Upper lobe of right lung (tissue), 1 donor: ENCODE measurements at regions of chr15 and their contacts with region 1.

Region 1: GRCh38 chr15:77543159-77543882 is 89.4 kb downstream of the LINGO1 start:
- DNase-seq: peak; percentile 91
- ATAC-seq: peak; percentile 92
- H3K4me3 ChIP-seq: peak overlapping the region; percentile 46
- H3K27ac ChIP-seq: no peak overlapping the region
- H3K4me1 ChIP-seq: peaks cover 21% of the 10 kb centered on the region
- H3K27me3 ChIP-seq: no peaks in the 10 kb centered on the region
- CTCF ChIP-seq: peak; percentile 98

Region 2: DNA sequence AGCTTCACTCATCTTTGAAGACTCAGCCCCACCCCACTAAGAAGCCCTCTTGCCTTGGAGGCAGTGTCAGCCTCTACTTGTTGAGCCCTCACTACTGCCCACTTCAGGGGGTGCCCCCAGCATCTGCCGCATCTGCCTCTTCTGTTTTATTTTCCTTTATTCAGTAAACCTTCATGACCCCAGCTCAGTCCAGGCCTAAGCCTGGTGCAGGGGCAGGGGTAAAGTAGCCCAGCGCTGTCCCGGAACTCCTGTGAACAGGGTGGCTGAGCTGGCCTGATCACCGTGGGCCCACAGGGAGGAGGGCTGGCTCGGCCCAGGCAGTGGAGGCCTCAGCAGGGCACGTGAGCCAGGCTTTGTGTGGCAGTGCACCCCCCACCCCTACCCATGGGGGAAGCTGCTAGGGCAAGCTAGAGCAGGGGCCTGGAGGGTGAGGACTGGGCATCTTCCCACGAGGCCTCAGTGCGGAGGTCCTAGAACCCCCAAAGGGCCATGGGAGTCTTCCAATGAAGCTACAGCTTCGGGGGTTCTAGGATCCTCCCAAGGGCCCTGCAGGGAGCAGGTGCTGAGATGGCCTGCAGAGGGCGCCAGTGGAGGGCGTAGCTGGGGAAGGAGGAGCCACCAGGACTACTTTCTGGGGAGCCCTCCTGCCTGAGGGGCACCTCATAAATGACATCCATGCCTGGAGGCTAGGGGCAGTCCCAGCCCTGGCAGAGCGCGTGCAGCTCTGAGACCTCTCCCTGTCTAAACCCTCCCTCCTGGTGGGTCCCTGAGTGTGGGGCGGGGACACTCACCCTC is 508.4 kb before region 1 on chr15:
- intact Hi-C with region 1: loop called (anchors 10 kb)
- DNase-seq: peak; percentile 74
- ATAC-seq: peak; percentile 32
- H3K4me3 ChIP-seq: no peak overlapping the region
- H3K27ac ChIP-seq: no peak overlapping the region
- H3K4me1 ChIP-seq: no peaks in the 10 kb centered on the region
- H3K27me3 ChIP-seq: no peaks in the 10 kb centered on the region
- CTCF ChIP-seq: peak; percentile 64

Region 3: DNA sequence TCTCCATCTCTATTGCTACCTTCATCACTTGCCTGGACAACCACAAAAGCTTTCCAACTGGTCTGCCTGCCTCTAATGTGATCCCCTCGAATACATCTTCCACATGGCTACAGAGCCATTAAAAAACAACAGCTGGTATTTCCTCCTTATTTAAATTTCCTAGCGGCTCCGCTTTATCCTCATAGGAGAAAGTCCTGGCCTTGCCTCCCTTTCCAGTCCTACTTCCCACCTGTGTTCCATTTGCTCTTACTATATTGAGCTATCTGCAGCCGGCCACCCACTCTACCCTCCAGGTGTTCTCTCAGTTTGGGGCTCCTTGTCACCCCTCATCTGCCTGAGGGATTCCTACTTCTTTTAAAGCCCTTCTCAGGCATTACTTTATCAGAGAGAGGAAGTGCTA is 422.7 kb before region 1 on chr15:
- intact Hi-C with region 1: loop called (anchors 5 kb)
- DNase-seq: no peak
- ATAC-seq: no peak
- H3K4me3 ChIP-seq: no peak overlapping the region
- H3K27ac ChIP-seq: no peak overlapping the region
- H3K4me1 ChIP-seq: peaks cover 10% of the 10 kb centered on the region
- H3K27me3 ChIP-seq: no peaks in the 10 kb centered on the region
- CTCF ChIP-seq: no peak

Region 4: DNA sequence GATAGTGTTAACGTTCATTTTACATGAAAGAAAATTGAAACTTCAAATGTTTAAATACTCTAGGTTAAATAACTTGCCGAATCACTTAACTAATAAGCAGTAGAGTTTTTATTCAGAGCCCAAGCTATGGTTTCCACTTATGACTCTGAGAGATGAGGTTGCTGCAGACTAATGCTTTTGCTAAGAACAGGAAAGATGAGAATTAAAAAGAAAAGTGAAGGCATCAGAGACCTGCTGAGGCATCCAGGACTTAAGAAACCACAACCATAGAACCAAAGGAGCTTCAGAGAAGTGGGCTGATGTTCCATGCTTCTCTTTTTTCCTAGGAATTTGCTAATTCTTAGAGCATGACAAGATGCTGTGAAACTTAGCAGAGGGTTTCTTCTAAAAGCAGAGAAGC is 113.1 kb before region 1 on chr15:
- intact Hi-C with region 1: no loop called
- DNase-seq: no peak
- ATAC-seq: no peak
- H3K4me3 ChIP-seq: no peak overlapping the region
- H3K27ac ChIP-seq: no peak overlapping the region
- H3K4me1 ChIP-seq: peaks cover 11% of the 10 kb centered on the region
- H3K27me3 ChIP-seq: no peaks in the 10 kb centered on the region
- CTCF ChIP-seq: no peak

Region 5: DNA sequence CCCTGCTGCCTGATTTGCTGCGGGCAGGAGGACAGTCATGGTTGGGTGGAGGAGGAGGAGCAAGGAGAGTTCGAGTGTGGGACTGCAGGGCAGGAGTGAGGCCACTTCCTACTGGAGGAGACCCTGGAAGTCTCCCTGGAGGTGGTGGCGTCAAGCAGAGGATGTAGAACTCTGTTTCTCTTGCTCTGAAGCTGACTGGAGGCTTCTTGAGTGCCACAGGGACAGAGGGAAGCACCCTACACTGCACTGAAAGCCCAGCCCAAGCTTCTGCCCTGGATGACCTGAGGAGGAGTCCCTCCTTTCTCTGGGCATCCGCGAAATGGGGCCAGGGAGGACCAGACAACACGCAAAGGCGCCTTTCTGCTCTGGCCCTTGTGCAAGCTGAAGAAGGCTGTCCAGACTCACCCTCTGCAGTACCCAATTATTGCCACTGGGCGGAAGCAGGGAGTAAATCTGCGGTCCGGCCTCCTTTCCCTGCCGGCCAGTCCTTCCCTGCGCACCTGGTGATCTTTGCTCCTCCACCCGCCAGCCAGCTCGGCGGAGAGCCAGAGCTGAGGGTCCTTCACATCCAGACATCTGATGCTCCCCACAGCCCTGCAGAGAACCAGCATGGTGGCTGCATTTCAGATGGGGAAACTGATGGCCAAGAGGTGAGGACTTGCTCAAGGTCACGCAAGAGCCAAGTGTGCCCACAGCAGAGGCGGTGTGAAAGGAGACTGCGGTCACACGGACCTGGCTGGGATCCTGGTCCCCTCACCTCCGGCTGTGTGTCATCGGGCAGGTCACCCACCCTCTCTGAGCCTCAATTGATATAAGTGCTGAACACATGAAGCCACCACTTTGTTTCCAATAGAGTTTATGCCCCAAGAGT is 327.1 kb after region 1 on chr15:
- intact Hi-C with region 1: no loop called
- DNase-seq: peak; percentile 71
- ATAC-seq: peak; percentile 80
- H3K4me3 ChIP-seq: no peak overlapping the region
- H3K27ac ChIP-seq: no peak overlapping the region
- H3K4me1 ChIP-seq: peaks cover 3% of the 10 kb centered on the region
- H3K27me3 ChIP-seq: no peaks in the 10 kb centered on the region
- CTCF ChIP-seq: peak; percentile 90